ENCODE measurements at regions of chr6 and their contacts with region 1.

Region 1: DNA sequence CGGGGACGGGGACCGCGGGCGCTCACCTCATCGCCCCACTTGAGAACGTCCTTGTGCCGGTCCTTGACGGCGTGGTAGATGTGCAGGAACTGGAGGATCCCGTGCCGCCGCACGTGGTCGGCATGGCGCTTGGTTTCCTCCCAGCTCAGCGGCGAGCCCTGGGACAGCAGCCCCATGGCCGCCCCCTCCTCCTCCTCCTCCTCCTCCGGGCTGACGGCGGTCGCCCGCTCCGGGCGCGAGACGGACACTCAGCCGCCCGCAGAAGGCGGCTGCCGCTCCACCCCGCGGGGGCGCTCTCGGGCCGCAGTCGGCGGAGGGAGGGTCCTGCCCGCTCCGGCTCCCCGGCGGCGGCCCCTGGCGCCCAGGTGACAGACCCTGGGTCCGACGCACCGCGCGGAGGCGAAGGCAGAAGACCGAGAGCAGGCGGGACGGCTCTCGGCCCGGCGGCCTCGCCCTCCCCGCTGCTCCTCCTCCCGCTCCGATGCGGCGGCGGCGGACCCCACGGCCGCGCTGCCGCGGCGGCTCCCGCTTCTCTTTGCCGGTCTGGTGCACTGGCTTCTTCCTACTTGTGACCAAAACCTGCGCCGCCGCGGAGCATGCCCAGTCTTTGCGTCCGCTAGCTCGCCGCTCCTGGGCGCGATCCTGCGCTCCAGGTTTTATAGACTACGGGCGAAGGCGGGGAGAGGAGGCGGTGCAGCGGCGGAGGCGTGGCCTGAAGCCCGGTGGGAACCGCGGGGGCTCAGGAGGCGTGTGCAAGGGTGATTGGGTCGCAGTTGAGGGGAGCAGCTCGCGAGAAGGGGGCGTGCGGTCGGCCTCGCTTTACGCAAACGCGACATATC is at the start of gene GCLC:
- DNase-seq: peak; percentile 93 to 94
- ATAC-seq: peak; percentile 76 to 78
- H3K4me3 ChIP-seq: peak within 1 kb of the TSS; percentile 67 to 98 (median 81)
- H3K27ac ChIP-seq: peak within 1 kb of the TSS; percentile 92 to 98 (median 96)
- H3K4me1 ChIP-seq: peaks cover 49 to 51% of the 10 kb centered on the region in 2 donors
- H3K27me3 ChIP-seq: no peaks in the 10 kb centered on the region
- CTCF ChIP-seq: peak; percentile 68 to 90 (median 88)
- POLR2A ChIP-seq: peak; percentile 93 to 96
- total RNA-seq, gene GCLC: 16.4 to 29.0 (median 20.5) TPM

Region 2: GRCh38 chr6:53359072-53359842 is 185.4 kb before region 1 on chr6:
- in situ Hi-C with region 1: no loop called
- intact Hi-C with region 1: loop called (anchors 5 kb)
- DNase-seq: peak; percentile 85 to 87
- ATAC-seq: peak; percentile 90 to 95
- H3K4me3 ChIP-seq: peak overlapping the region; percentile 63 to 74 (median 66)
- H3K27ac ChIP-seq: peak overlapping the region; percentile 75 to 87 (median 80)
- H3K4me1 ChIP-seq: peaks cover 0 to 4% of the 10 kb centered on the region in 2 donors
- H3K27me3 ChIP-seq: no peaks in the 10 kb centered on the region
- CTCF ChIP-seq: no peak
- POLR2A ChIP-seq: peak; percentile 51 to 83

Region 3: DNA sequence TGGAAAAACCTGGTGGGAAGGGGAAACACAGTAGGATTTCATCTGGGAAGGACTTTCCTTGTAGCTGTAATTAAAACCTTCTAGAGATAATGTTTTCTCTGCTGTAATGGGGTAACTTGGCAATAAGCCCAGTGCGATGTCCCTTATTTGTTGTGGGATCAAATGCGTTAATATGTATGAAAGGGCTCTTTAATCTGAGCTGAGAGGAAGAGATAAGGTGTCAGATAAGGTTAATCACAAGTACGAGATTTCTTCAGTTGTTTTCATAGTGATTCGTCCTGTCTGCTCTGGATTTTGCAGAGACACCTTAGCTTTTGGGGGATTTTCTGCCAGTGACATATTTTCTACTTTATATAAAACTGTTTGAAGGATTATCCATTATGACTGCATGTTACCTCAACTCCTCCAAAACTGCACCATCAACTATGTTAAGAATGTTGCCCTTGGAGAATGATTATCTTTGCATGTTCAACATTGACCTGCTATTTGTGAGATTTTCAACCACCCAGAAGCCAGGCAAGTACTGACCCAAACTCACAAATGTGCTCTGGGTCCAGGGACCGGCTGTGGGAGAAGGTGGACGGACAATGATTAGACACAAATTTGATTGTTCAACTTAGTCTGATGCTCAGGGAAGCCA is 174.7 kb before region 1 on chr6:
- in situ Hi-C with region 1: no loop called
- intact Hi-C with region 1: no loop called
- DNase-seq: no peak
- ATAC-seq: no peak
- H3K4me3 ChIP-seq: no peak overlapping the region
- H3K27ac ChIP-seq: no peak overlapping the region
- H3K4me1 ChIP-seq: no peaks in the 10 kb centered on the region
- H3K27me3 ChIP-seq: no peaks in the 10 kb centered on the region
- CTCF ChIP-seq: no peak
- POLR2A ChIP-seq: no peak

Region 4: GRCh38 chr6:53439556-53439955 is 105.1 kb before region 1 on chr6:
- in situ Hi-C with region 1: no loop called
- intact Hi-C with region 1: no loop called
- DNase-seq: no peak
- ATAC-seq: no peak
- H3K4me3 ChIP-seq: no peak overlapping the region
- H3K27ac ChIP-seq: no peak overlapping the region
- H3K4me1 ChIP-seq: peaks cover 0 to 6% of the 10 kb centered on the region in 2 donors
- H3K27me3 ChIP-seq: no peaks in the 10 kb centered on the region
- CTCF ChIP-seq: no peak
- POLR2A ChIP-seq: no peak

Region 5: DNA sequence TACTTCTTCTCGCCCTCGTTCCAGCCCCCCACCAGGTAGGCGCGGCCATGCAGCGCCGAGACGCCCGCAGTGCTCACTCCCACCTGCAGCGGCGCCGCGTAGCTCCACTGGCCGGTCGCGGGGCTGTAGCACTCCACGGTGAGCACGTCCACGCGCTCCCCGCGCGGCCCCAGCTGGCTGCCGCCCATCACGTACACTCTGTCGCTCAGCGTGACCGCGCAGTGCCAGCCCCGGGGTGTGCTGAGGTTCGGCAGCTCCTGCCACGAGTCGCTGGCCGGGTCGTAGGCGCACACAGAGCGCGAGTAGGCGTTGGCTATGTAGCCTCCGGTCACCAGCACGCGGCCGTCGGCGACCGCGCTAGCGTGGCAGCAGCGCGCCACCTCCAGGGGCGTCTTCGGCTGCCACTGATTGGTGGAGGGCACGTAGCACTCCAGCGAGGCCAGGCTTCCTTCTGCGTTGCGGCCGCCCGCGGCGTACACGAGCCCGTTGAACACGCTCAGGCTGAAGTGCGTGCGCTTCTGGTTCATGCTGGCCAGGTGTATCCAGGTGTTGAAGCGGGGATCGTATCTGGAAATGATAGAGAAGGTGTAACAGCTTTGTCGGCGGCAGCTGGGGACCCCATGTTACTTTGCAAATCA is 107.2 kb after region 1 on chr6:
- in situ Hi-C with region 1: loop called in 3 of 4 experiments (anchors 5 to 10 kb)
- intact Hi-C with region 1: loop called (anchors 1 kb)
- DNase-seq: peak; percentile 63 to 85
- ATAC-seq: peak; percentile 84 to 86
- H3K4me3 ChIP-seq: peak overlapping the region; percentile 59 to 65 (median 63)
- H3K27ac ChIP-seq: peak overlapping the region; percentile 79 to 92 (median 89)
- H3K4me1 ChIP-seq: peaks cover 48 to 72% of the 10 kb centered on the region in 2 donors
- H3K27me3 ChIP-seq: no peaks in the 10 kb centered on the region
- CTCF ChIP-seq: peak in 4 of 5 experiments; percentile 33 to 46 (median 36)
- POLR2A ChIP-seq: peak; percentile 17 to 57

Region 6: DNA sequence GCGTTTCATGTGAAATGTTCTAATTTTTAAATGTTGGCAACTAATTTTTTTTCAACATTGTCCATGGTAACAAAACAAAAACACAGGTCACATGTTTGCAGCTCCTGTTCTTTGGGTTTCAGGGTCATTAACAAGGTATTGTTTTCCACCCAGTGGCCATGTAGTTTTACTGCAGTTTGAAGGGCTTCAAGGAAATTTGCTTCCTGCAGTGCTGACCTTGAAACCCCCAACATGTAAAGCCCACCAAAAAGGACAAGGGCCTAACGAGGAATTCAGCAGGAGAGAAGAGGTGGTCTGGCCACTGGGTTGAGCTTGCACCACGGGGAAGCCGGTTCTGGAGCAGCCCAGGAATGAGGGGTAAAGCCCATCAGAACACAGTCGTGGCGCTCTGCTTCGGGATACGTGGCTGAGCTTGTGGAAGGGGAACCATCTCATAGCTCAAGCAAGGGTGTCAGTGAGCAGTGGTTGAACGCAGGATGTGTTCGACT is 134.8 kb after region 1 on chr6:
- in situ Hi-C with region 1: no loop called
- intact Hi-C with region 1: loop called (anchors 1 kb)
- DNase-seq: no peak
- ATAC-seq: peak; percentile 76 to 92
- H3K4me3 ChIP-seq: no peak overlapping the region
- H3K27ac ChIP-seq: peak overlapping the region in 3 of 4 donors; percentile 22 to 62 (median 43)
- H3K4me1 ChIP-seq: peaks cover 5 to 8% of the 10 kb centered on the region in 2 donors
- H3K27me3 ChIP-seq: no peaks in the 10 kb centered on the region
- CTCF ChIP-seq: peak; percentile 33 to 59 (median 38)
- POLR2A ChIP-seq: no peak

Region 7: GRCh38 chr6:53725791-53726431 is 181.2 kb after region 1 on chr6:
- in situ Hi-C with region 1: no loop called
- intact Hi-C with region 1: loop called (anchors 2 kb)
- DNase-seq: peak; percentile 54 to 64
- ATAC-seq: peak; percentile 86 to 90
- H3K4me3 ChIP-seq: no peak overlapping the region
- H3K27ac ChIP-seq: no peak overlapping the region
- H3K4me1 ChIP-seq: no peaks in the 10 kb centered on the region
- H3K27me3 ChIP-seq: no peaks in the 10 kb centered on the region
- CTCF ChIP-seq: peak; percentile 83 to 99 (median 89)
- POLR2A ChIP-seq: no peak